ENCODE measurements at regions of chr11 and their contacts with region 1.

Region 1: DNA sequence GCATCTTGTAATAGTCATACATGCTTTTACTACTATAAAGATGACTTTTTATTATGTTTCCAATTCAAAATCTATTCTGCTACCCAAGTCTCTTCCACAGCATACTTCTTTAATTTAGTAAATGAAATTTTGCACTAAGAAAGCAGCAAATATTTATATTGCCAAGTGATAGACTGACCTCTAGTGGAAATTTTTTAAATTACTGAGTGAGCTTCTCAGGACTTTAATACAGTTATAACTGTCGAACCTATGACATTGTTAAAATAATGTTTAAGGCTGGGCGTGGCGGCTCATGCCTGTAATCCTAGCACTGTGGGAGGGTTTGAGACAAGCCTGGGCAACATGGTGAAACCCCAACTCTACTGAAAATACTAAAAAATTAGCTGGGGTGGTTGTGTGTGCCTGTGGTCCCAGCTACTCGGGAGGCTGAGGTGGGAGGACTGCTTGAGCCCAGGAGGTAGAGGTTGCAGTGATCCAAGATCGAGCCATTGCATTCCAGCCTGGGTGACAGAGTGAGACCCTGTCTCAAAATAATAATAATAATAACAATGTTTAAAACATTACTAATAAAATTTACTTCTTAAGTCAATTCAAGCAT is 27.3 kb downstream of the STK33 start:
- DNase-seq: no peak
- ATAC-seq: peak in 2 of 4 donors; percentile 42 to 75
- H3K4me3 ChIP-seq: no peak overlapping the region
- H3K27ac ChIP-seq: no peak overlapping the region
- H3K4me1 ChIP-seq: no peaks in the 10 kb centered on the region
- H3K27me3 ChIP-seq: peaks cover 0 to 1% (median 0%) of the 10 kb centered on the region in 3 donors
- CTCF ChIP-seq: peak; percentile 78

Region 2: DNA sequence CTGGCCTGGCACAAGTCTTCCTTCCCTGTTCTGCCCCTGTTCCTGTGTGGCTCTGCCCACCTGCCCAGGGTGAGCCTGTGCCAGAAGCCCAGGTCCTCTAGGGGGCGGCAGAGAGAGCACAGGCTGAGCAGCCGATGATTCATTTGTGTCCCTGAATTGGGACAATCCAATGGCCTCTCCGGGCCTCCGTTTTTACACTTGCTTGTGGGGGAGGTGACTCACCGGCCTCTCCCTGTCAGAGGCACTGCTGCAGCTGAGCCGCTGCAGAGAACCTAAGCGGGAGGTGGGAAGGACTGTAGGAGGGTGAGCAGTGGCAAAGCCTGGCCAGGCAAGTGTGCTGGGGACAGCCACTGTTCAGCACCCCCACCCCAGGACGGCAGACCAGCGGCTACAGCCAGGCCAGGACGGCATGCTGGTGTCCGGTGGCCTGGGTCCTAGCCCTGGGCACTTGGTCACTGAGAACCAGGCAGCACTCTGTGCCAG is 237.8 kb before region 1 on chr11:
- intact Hi-C with region 1: loop called in 1 of 2 experiments (anchors 5 kb)
- DNase-seq: peak; percentile 80 to 88
- ATAC-seq: peak; percentile 88 to 98 (median 95)
- H3K4me3 ChIP-seq: peak overlapping the region; percentile 51
- H3K27ac ChIP-seq: no peak overlapping the region
- H3K4me1 ChIP-seq: peaks cover 6% of the 10 kb centered on the region
- H3K27me3 ChIP-seq: no peaks in the 10 kb centered on the region
- CTCF ChIP-seq: peak; percentile 69

Region 3: GRCh38 chr11:8342821-8343681 is 223.7 kb before region 1 on chr11:
- intact Hi-C with region 1: loop called in 1 of 2 experiments (anchors 5 kb)
- DNase-seq: no peak
- ATAC-seq: peak in 2 of 4 donors; percentile 11 to 19
- H3K4me3 ChIP-seq: no peak overlapping the region
- H3K27ac ChIP-seq: no peak overlapping the region
- H3K4me1 ChIP-seq: no peaks in the 10 kb centered on the region
- H3K27me3 ChIP-seq: no peaks in the 10 kb centered on the region
- CTCF ChIP-seq: no peak

Measured in psoas muscle (tissue), 8 donors.